ENCODE measurements at regions of chr19 and their contacts with region 1.

Region 1: DNA sequence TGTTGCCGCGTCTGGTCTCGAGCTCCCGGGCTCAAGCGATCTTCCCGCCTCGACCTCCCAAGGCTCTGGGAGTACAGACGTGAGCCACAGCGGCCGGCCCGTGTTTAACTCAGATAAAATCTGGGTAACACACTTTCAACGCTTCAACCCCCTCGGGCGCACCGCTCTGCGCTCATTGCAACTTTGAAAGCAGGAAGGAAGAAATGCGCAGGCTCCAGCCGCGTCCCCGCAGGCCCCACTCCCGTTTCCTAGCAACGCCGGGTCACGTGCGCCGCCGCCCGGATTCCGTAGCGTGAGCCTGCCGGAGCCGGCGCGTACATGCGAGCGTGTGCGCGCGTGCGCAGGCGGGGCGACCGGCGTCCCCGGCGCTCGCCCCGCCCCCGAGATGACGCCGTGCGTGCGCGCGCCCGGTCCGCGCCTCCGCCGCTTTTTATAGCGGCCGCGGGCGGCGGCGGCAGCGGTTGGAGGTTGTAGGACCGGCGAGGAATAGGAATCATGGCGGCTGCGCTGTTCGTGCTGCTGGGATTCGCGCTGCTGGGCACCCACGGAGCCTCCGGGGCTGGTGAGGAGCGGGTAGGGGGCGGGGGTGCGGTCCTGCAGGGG is at the start of gene BSG:
- H3K4me3 ChIP-seq: peak within 1 kb of the TSS; percentile 92
- H3K27ac ChIP-seq: peak within 1 kb of the TSS; percentile 91
- H3K4me1 ChIP-seq: peaks cover 7% of the 10 kb centered on the region
- CTCF ChIP-seq: no peak

Region 2: GRCh38 chr19:355134-355533 is 217.1 kb before region 1 on chr19:
- CTCF ChIA-PET with region 1: no interaction called
- POLR2A ChIA-PET with region 1: no interaction called
- H3K4me3 ChIP-seq: no peak overlapping the region
- H3K27ac ChIP-seq: no peak overlapping the region
- H3K4me1 ChIP-seq: no peaks in the 10 kb centered on the region
- CTCF ChIP-seq: no peak

Region 3: GRCh38 chr19:531009-531752 is 41.1 kb before region 1 on chr19:
- CTCF ChIA-PET with region 1: no interaction called
- POLR2A ChIA-PET with region 1: interaction called, 17 read pairs
- H3K4me3 ChIP-seq: peak overlapping the region; percentile 89
- H3K27ac ChIP-seq: peak overlapping the region; percentile 96
- H3K4me1 ChIP-seq: peaks cover 7% of the 10 kb centered on the region
- CTCF ChIP-seq: peak; percentile 27; the same call in 1 of the 2 replicates

Region 4: GRCh38 chr19:588093-588740 is 16.0 kb after region 1 on chr19:
- CTCF ChIA-PET with region 1: interaction called, 17 read pairs
- POLR2A ChIA-PET with region 1: interaction called, 6 read pairs
- H3K4me3 ChIP-seq: no peak overlapping the region
- H3K27ac ChIP-seq: peak overlapping the region; percentile 35; the same call in 1 of the 2 replicates
- H3K4me1 ChIP-seq: peaks cover 7% of the 10 kb centered on the region; the same call in 1 of the 2 replicates
- CTCF ChIP-seq: peak; percentile 26; the same call in 1 of the 2 replicates

Measured in HEK293 (cell line).